WTC11 (cell line): ENCODE measurements at regions of chr15 and their contacts with region 1.

Region 1: DNA sequence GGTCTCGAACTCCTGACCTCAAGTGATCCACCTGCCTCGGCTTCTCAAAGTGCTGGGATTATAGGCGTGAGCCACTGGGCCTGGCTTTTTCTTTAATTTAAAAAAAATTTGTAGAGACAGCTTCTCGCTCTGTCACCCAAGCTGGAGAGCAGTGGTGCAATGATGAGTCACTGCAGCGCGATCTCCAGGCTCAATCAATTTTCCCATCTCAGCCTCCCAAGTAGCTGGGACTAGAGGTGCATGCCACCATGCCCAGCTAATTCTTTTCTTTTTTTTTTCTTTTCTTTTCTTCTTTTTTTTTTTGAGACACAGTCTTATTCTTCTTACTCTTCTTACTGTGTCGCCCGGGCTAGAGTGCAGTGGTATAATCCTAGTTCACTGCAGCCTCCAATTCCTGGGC is 19.8 kb downstream of the TUBGCP4 start:
- DNase-seq: no peak
- ATAC-seq: no peak
- H3K4me3 Mint-ChIP-seq: no peak overlapping the region
- H3K27ac Mint-ChIP-seq: no peak overlapping the region
- H3K4me1 Mint-ChIP-seq: no peaks in the 10 kb centered on the region
- H3K27me3 Mint-ChIP-seq: no peaks in the 10 kb centered on the region
- CTCF ChIP-seq: no peak

Region 2: GRCh38 chr15:43105778-43106485 is 284.8 kb before region 1 on chr15 and contains the start of gene UBR1:
- CTCF ChIA-PET with region 1: no interaction called
- POLR2A ChIA-PET with region 1: no interaction called
- DNase-seq: peak; percentile 89
- ATAC-seq: peak; percentile 97
- H3K4me3 Mint-ChIP-seq: peak within 1 kb of the TSS; percentile 97
- H3K27ac Mint-ChIP-seq: peak within 1 kb of the TSS; percentile 90
- H3K4me1 Mint-ChIP-seq: peaks cover 11% of the 10 kb centered on the region
- H3K27me3 Mint-ChIP-seq: peaks cover 10% of the 10 kb centered on the region
- CTCF ChIP-seq: no peak
- total RNA-seq, gene UBR1: 17.2 to 18.9 TPM (median 17.9 TPM) in 3 replicates

Region 3: GRCh38 chr15:43370975-43371974 is 19.4 kb before region 1 on chr15 and contains the starts of genes TUBGCP4 and ZSCAN29:
- CTCF ChIA-PET with region 1: interaction called, 12 read pairs
- POLR2A ChIA-PET with region 1: interaction called, 6 read pairs
- DNase-seq: peak; percentile 92
- ATAC-seq: peak; percentile 90
- H3K4me3 Mint-ChIP-seq: peak within 1 kb of the TSS; percentile 92
- H3K27ac Mint-ChIP-seq: peak within 1 kb of the TSS; percentile 83
- H3K4me1 Mint-ChIP-seq: peaks cover 33% of the 10 kb centered on the region
- H3K27me3 Mint-ChIP-seq: no peaks in the 10 kb centered on the region
- CTCF ChIP-seq: no peak
- total RNA-seq, gene TUBGCP4: 22.5 to 28.5 TPM (median 25.4 TPM) in 3 replicates
- total RNA-seq, gene ZSCAN29: 39.7 to 41.7 TPM (median 41.6 TPM) in 3 replicates

Region 4: DNA sequence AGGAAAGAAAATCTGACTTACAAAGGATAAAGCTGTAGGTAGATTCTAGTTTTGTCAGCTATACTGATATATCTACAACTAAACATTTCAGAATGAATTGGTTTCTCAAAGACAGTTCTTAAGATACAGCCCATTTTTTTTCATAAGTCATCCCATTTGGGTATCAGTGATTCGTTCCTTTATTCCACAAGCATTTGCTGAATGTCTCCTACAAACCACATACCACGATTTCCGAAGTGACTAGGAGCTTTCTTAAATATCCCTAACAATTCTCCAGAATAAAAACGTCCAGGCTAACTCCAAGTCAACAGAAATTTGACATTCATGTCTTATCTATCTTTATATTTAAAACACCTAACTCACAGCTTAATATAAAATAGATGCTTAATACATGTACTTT is 42.4 kb after region 1 on chr15:
- CTCF ChIA-PET with region 1: no interaction called
- POLR2A ChIA-PET with region 1: no interaction called
- DNase-seq: no peak
- ATAC-seq: no peak
- H3K4me3 Mint-ChIP-seq: no peak overlapping the region
- H3K27ac Mint-ChIP-seq: no peak overlapping the region
- H3K4me1 Mint-ChIP-seq: no peaks in the 10 kb centered on the region
- H3K27me3 Mint-ChIP-seq: no peaks in the 10 kb centered on the region
- CTCF ChIP-seq: no peak